Caco-2 (cell line): ENCODE measurements at regions of chr6 and their contacts with region 1.

Region 1: GRCh38 chr6:49625140-49625539 is 11.5 kb downstream of the RHAG start:
- DNase-seq: no peak
- H3K4me3 ChIP-seq: no peak overlapping the region
- H3K4me3 Mint-ChIP-seq: no peak overlapping the region
- H3K27ac Mint-ChIP-seq: no peak overlapping the region
- H3K4me1 ChIP-seq: no peaks in the 10 kb centered on the region
- H3K4me1 Mint-ChIP-seq: no peaks in the 10 kb centered on the region
- H3K27me3 ChIP-seq: no peaks in the 10 kb centered on the region
- H3K27me3 Mint-ChIP-seq: no peaks in the 10 kb centered on the region
- CTCF ChIP-seq: no peak

Region 2: DNA sequence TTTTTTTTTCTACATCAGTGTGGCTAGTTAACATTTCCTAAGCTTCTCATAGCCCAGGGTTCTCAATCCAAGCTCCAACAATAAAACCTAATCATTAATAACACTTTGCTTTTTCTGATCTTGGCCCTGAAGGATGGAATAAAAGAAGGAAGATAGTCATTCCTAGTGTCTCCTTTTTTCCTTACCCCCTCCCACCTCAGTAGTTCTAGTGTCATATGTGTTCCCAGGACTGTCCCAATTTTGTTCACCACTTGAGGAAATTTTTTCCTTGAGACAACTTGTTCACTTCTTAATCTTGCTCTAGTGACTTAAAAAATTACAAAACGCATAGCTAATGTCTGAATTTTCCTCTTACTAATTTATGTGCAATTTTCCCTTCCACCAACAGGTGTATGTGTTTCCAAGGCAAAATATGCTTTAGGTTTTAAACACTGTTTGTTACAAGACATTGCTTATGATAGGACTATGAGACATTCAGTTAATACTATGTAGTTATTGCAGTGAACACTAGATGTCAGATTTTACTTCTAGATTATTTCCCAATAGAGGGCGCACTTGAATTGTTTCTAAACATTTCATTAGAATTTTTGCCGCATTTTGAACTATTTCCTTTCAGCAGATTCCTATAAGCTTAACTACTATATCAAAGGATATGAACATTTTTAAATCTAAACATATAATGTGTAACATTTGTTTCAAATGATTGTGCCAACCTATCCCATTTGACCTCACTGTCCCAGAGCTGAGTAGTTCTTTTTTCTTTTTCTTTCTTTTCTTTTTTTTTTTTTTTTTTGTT is 93.2 kb before region 1 on chr6:
- CTCF ChIA-PET with region 1: no interaction called
- POLR2A ChIA-PET with region 1: no interaction called
- intact Hi-C with region 1: loop called (anchors 1 kb)
- DNase-seq: peak in 1 of 2 experiments; percentile 32
- H3K4me3 ChIP-seq: no peak overlapping the region
- H3K4me3 Mint-ChIP-seq: no peak overlapping the region
- H3K27ac Mint-ChIP-seq: no peak overlapping the region
- H3K4me1 ChIP-seq: no peaks in the 10 kb centered on the region
- H3K4me1 Mint-ChIP-seq: no peaks in the 10 kb centered on the region
- H3K27me3 ChIP-seq: no peaks in the 10 kb centered on the region
- H3K27me3 Mint-ChIP-seq: no peaks in the 10 kb centered on the region
- CTCF ChIP-seq: peak; percentile 80 to 82

Region 3: DNA sequence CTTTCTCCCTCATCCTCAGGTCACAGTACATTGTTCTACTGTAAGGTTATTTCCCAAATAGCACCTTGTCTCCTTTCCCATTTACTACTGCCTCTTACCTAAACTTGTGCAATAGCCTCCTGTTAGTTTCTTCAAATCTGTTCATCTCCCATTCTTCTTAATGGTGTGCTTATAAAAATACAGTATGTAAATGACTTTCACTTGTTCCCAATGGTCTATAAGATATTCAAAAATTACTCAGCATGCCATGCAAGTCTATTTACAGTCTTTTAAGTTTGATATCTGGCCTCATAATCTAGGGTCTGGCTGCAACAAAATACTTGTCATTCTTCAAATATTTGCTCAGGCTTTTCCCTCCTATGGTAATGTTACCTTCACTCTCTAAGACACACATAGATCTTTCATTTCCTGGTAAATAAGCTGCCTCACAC is 43.0 kb after region 1 on chr6:
- CTCF ChIA-PET with region 1: no interaction called
- POLR2A ChIA-PET with region 1: no interaction called
- intact Hi-C with region 1: loop called (anchors 5 kb)
- DNase-seq: peak in 1 of 2 experiments; percentile 7
- H3K4me3 ChIP-seq: no peak overlapping the region
- H3K4me3 Mint-ChIP-seq: no peak overlapping the region
- H3K27ac Mint-ChIP-seq: no peak overlapping the region
- H3K4me1 ChIP-seq: peaks cover 23% of the 10 kb centered on the region
- H3K4me1 Mint-ChIP-seq: no peaks in the 10 kb centered on the region
- H3K27me3 ChIP-seq: no peaks in the 10 kb centered on the region
- H3K27me3 Mint-ChIP-seq: no peaks in the 10 kb centered on the region
- CTCF ChIP-seq: no peak

Region 4: GRCh38 chr6:49849213-49849907 is 224.2 kb after region 1 on chr6:
- CTCF ChIA-PET with region 1: interaction called, 12 read pairs
- POLR2A ChIA-PET with region 1: no interaction called
- intact Hi-C with region 1: loop called (anchors 1 kb)
- DNase-seq: peak in 1 of 2 experiments; percentile 30
- H3K4me3 ChIP-seq: no peak overlapping the region
- H3K4me3 Mint-ChIP-seq: no peak overlapping the region
- H3K27ac Mint-ChIP-seq: no peak overlapping the region
- H3K4me1 ChIP-seq: no peaks in the 10 kb centered on the region
- H3K4me1 Mint-ChIP-seq: no peaks in the 10 kb centered on the region
- H3K27me3 ChIP-seq: no peaks in the 10 kb centered on the region
- H3K27me3 Mint-ChIP-seq: no peaks in the 10 kb centered on the region
- CTCF ChIP-seq: peak; percentile 27 to 57

Region 5: GRCh38 chr6:50030777-50031562 is 405.8 kb after region 1 on chr6:
- CTCF ChIA-PET with region 1: no interaction called
- POLR2A ChIA-PET with region 1: no interaction called
- intact Hi-C with region 1: loop called (anchors 2 kb)
- DNase-seq: peak; percentile 40 to 52
- H3K4me3 ChIP-seq: no peak overlapping the region
- H3K4me3 Mint-ChIP-seq: no peak overlapping the region
- H3K27ac Mint-ChIP-seq: no peak overlapping the region
- H3K4me1 ChIP-seq: no peaks in the 10 kb centered on the region
- H3K4me1 Mint-ChIP-seq: no peaks in the 10 kb centered on the region
- H3K27me3 ChIP-seq: no peaks in the 10 kb centered on the region
- H3K27me3 Mint-ChIP-seq: peaks cover 10% of the 10 kb centered on the region
- CTCF ChIP-seq: peak; percentile 39 to 47